HCT116 (cell line): ENCODE measurements at regions of chr3 and their contacts with region 1.

Region 1: DNA sequence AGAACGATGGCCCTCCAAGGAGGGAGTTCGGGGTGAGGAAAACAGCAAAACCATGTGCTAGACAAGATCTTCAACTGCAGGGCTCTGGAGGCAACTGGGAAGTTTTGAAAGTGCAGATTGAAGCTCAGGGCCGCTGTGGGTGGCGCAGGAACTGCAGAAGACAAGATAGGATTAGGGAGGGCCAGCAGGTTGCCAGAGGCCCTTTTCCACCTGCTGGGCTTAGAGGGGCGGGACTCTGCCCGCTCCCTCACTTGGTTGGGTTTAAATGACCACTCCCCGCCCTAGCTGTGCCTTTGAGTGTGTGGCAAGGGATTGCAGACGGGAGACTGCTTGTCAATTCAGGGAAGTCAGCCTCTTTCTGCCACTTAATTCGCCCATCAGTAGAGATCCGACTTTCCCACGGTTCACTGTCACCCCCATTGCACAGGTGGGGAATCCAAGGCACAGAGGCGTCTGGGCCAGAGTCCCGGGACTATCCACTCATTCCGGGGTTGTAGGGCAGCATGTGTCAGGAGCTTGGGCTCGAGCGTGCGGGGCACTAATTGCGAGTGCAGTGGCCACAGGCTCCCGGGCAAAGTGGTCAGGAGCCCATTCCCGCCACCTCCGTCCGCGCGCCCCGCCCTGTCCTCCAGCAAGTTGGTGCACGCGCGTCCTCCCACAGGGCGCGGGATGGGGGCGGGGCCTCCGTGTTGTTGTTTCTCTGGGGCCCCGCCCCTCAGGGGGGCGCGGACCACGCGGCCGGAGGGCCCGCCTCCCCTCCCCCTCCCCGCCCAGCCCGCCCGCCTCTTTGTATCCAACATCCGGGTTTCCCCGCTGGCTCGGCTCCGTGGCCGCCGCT is at the start of gene ACVR2B:
- DNase-seq: peak; percentile 54
- ATAC-seq: peak; percentile 67
- H3K4me3 ChIP-seq: peak within 1 kb of the TSS; percentile 77 to 84
- H3K27ac ChIP-seq: peak within 1 kb of the TSS; percentile 97
- H3K4me1 ChIP-seq: peaks cover 23 to 48% of the 10 kb centered on the region in 2 experiments
- H3K27me3 ChIP-seq: no peaks in the 10 kb centered on the region
- CTCF ChIP-seq: no peak
- POLR2A ChIP-seq: no peak
- RAD21 ChIP-seq: no peak
- total RNA-seq, gene ACVR2B: 18.3 TPM

Region 2: DNA sequence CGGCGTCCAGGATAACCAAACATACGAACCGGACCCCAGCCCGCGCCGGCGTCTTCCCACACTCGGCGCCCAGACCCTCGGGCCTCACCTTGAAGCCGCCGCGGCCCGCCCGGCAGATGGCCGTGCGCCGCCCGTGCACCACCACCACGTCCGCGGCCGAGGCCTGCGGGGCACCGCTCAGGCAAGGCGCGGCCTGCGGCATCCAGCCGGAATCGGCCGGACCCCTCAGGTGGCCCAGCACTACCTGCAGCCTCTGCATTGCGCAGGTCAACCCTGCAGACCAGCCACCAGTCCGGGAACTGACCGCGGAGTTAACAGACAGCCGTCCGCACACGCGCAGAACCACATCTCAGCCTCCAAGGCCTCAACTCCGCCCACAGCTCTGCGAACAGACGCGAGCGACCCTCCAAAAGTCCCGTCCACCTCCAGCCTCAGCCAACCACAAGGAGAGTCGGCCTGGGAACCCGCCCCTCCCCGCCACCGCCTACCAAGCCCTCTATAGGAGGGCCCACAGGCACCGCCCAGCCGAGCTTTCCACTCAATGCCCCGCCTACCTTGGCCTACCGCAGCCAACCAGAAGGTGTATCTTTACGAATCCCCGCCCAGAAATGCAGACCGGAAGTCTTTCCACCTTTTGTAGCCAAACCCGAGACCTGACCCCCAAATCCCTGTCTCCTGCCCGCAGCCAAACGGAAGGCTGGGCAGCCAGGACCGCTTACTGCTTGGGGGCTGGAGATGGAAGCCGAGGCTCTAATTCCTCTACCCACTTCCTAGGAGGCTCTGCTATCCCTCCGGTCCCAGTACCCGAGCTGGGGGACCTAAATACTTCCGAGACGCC is 316.3 kb before region 1 on chr3 and contains the start of gene ACAA1:
- CTCF ChIA-PET with region 1: no interaction called
- POLR2A ChIA-PET with region 1: no interaction called
- RAD21 ChIA-PET with region 1: no interaction called
- intact Hi-C with region 1: loop called (anchors 10 kb)
- DNase-seq: peak; percentile 98
- ATAC-seq: peak; percentile 92
- H3K4me3 ChIP-seq: peak within 1 kb of the TSS; percentile 87 to 91
- H3K27ac ChIP-seq: peak within 1 kb of the TSS; percentile 75
- H3K4me1 ChIP-seq: peaks cover 36 to 70% of the 10 kb centered on the region in 2 experiments
- H3K27me3 ChIP-seq: no peaks in the 10 kb centered on the region
- CTCF ChIP-seq: no peak
- POLR2A ChIP-seq: peak; percentile 89
- RAD21 ChIP-seq: no peak
- total RNA-seq, gene ACAA1: 49.0 TPM

Region 3: DNA sequence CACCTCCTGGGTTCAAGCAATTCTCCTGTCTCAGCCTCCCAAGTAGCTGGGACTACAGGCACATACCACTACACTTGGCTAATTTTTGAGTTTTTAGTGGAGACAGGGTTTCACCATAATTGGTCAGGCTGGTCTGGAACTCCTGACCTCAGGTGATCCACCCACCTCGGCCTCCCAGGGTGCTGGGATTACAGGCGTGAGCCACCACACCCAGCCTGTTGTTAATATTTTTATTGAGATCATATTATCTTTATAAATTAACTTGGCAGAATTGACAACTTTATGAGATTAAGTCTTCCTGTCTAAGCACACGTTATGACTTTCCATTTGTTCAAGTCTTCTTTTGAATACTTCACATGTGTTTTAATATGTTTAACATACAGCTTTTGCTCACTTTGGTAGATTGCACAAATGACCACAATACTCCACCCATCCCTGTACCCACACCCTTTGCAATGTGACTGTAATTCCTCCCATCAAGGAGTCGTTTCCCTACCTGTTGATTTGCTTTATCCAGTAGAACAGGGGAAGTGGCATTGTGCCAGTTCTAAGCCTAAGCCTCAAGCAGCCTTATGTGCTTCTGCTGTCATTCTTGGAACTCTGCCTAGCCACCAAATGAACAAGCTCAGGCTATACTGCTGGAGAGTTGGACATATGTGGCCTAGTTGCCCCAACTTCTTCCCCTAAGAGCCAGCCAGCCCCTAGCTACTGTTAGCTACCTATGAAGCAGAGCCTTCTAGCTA is 98.5 kb before region 1 on chr3:
- CTCF ChIA-PET with region 1: no interaction called
- POLR2A ChIA-PET with region 1: no interaction called
- RAD21 ChIA-PET with region 1: no interaction called
- intact Hi-C with region 1: loop called (anchors 10 kb)
- DNase-seq: no peak
- ATAC-seq: no peak
- H3K4me3 ChIP-seq: no peak overlapping the region
- H3K27ac ChIP-seq: no peak overlapping the region
- H3K4me1 ChIP-seq: peaks cover 0 to 15% of the 10 kb centered on the region in 2 experiments; a peak in 2 of 4 replicates
- H3K27me3 ChIP-seq: no peaks in the 10 kb centered on the region
- CTCF ChIP-seq: no peak
- POLR2A ChIP-seq: no peak
- RAD21 ChIP-seq: no peak